Activated T-helper 1 cell treated with anti-CD3 and anti-CD28 coated beads, Interleukin-12 subunit alpha, Interleukin-12 subunit beta, Interleukin-2, Interleukin-4 antibody, amounts not matched to agents 30 ng/mL and 10 ng/mL and 1 ng/mL, durations not matched to agents 14 hours and 24 hours and 36 hours (primary cell): ENCODE measurements at regions of chr1 and their contacts with region 1.

Region 1: DNA sequence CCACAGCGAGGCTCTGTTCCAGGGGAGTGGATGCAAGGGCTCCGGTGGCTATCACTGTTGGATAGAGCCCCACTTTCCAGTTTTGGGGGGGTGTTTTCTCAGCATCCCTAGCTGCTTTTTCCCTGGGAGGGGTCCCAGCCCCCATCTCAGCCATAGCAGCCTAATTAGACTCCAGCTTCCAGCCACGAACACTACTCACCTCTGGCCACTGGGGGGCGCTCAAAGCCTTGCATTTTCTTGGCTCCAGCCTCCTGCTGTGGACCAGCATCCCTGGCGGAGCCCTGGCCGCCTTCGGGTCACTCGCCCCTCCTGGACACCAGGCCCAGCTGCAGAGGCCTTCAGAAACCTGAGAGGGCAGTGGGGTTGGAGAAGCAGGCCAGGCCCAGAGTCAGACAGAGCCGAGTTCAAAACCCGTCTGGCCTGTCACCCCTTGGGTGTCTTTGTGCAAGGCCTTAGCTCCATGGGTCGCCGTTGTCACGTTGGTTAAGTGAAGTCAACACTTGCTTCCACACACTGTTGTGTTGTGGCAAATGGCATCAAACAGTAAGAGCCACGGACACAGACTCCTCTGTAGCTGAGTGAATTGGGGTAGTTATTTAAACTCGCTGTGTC is 93.5 kb upstream of the ACTL8 start:
- DNase-seq: peak; percentile 17
- H3K4me3 Mint-ChIP-seq: no peak overlapping the region
- H3K27ac Mint-ChIP-seq: no peak overlapping the region
- H3K4me1 Mint-ChIP-seq: no peaks in the 10 kb centered on the region
- H3K27me3 Mint-ChIP-seq: no peaks in the 10 kb centered on the region

Region 2: GRCh38 chr1:17682399-17682798 is 20.7 kb after region 1 on chr1:
- intact Hi-C with region 1: no loop called
- DNase-seq: no peak
- H3K4me3 Mint-ChIP-seq: no peak overlapping the region
- H3K27ac Mint-ChIP-seq: no peak overlapping the region
- H3K4me1 Mint-ChIP-seq: no peaks in the 10 kb centered on the region
- H3K27me3 Mint-ChIP-seq: no peaks in the 10 kb centered on the region

Region 3: GRCh38 chr1:18581420-18581880 is 919.8 kb after region 1 on chr1:
- intact Hi-C with region 1: loop called (anchors 5 kb)
- DNase-seq: peak; percentile 9
- H3K4me3 Mint-ChIP-seq: no peak overlapping the region
- H3K27ac Mint-ChIP-seq: no peak overlapping the region
- H3K4me1 Mint-ChIP-seq: no peaks in the 10 kb centered on the region
- H3K27me3 Mint-ChIP-seq: peaks cover 1% of the 10 kb centered on the region